GM10248 (cell line): ENCODE measurements at regions of chr14 and their contacts with region 1.

Region 1: GRCh38 chr14:105999361-106000028 is 473.1 kb downstream of the TMEM121 start:
- DNase-seq: peak; percentile 68
- CTCF ChIP-seq: peak; percentile 84

Region 2: GRCh38 chr14:105537369-105538164 is 461.9 kb before region 1 on chr14:
- CTCF ChIA-PET with region 1: interaction called, 11 read pairs
- POLR2A ChIA-PET with region 1: no interaction called
- DNase-seq: peak; percentile 90
- CTCF ChIP-seq: peak; percentile 96

Region 3: GRCh38 chr14:105861985-105862465 is 137.5 kb before region 1 on chr14:
- CTCF ChIA-PET with region 1: interaction called, 10 read pairs
- POLR2A ChIA-PET with region 1: no interaction called
- DNase-seq: peak; percentile 76
- CTCF ChIP-seq: no peak

Region 4: DNA sequence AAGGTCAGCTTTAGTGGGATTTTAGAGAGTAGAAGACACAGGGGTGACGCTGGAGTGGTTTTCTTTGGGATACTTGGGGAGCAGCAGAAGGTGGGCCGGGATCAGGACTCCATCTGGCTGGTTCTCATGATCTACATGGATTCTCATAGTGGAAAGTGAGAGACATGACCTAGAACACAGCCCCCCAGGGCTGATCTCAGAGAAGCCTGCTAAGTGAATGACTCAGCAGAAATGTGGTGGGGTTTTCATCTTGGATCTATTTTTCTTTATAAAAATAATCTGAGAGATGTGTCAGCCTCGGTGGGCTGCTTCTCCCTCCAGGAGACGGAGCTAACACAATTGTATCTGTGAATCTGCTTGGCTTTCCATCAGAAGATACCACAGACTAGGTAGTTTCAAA is 11.3 kb after region 1 on chr14:
- CTCF ChIA-PET with region 1: interaction called, 10 read pairs
- POLR2A ChIA-PET with region 1: no interaction called
- DNase-seq: no peak
- CTCF ChIP-seq: no peak

Region 5: GRCh38 chr14:106039400-106039799 is 39.9 kb after region 1 on chr14:
- CTCF ChIA-PET with region 1: interaction called, 14 read pairs
- POLR2A ChIA-PET with region 1: no interaction called
- DNase-seq: peak; percentile 22
- CTCF ChIP-seq: peak; percentile 42